Mammary epithelial cell (primary cell): ENCODE measurements at regions of chr1 and their contacts with region 1.

Region 1: DNA sequence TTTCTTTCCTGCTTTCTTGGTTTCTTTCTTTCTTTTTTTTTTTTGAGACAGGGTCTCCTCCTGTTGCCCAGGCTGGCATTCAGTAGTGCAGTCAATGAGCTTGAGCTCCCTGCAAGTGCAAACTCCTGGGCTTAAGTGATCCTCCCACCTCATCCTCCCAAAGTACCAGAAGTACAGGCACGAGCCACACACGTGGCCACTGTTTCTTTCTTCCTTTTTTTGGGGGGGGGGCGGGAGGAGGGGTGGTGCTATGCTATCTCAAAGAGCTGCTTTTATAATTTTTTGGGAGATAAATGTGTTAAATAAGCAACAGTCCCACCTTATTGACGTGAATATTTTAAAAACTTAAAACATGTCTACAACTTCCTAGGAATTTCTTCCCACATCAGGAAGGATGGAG is 42.2 kb downstream of the AK4 start:
- DNase-seq: no peak
- H3K4me3 ChIP-seq: no peak overlapping the region
- H3K27ac ChIP-seq: no peak overlapping the region
- H3K4me1 ChIP-seq: peaks cover 2% of the 10 kb centered on the region
- H3K27me3 ChIP-seq: no peaks in the 10 kb centered on the region
- CTCF ChIP-seq: no peak

Region 2: DNA sequence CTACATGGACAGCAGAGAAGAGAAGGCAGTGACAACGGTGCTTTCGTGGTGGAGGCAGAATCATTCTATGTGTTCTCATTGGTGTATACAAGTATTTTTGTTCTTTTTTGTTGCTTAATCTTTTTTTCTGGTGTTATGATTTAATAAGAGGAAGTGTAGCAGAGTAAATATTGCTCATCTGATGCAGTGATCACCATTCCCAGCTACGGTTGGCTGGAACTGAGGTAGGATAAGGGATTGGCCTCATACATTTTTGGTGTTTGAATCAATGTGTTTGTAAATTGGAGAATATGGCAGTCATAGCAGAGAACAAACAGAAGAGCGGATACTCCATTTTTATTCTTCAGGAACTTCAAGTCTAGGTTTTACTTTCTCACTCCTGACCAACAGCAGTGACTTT is 910.2 kb before region 1 on chr1:
- CTCF ChIA-PET with region 1: interaction called, 18 read pairs
- dilution Hi-C with region 1: no loop called
- in situ Hi-C with region 1: no loop called
- intact Hi-C with region 1: no loop called
- DNase-seq: peak; percentile 55
- H3K4me3 ChIP-seq: no peak overlapping the region
- H3K27ac ChIP-seq: no peak overlapping the region
- H3K4me1 ChIP-seq: peaks cover 6% of the 10 kb centered on the region
- H3K27me3 ChIP-seq: no peaks in the 10 kb centered on the region
- CTCF ChIP-seq: no peak